AG04450 (cell line): ENCODE measurements at regions of chr9 and their contacts with region 1.

Region 1: DNA sequence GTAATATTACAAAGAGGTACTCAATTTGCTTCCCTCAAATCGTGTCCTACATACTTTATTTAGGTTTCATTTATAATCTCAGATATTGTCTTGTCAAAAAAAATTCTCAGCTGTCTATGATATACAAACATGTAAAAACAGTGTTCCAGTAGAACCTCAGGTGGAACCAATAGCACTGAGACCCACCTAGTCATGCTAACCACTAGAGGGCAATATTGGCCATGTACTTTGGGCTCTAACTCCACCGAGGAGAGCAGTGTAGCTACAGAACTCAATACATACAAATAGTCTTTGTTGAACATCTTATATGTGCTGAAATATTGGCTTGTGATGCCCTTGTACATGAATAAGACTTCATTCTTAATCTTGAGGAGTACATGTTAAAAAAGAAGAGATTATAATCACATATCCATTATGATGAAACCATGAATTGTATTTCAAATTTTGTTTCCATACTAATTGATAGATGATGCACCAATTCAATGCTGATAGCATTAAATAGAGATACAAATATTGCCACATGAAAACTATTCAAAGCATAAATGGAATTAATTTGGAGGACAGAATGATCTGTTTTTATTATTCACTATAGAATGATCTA is 71.2 kb upstream of the CNTLN start:
- DNase-seq: peak; percentile 23
- H3K4me3 ChIP-seq: no peak overlapping the region
- H3K27ac ChIP-seq: no peak overlapping the region
- H3K27me3 ChIP-seq: no peaks in the 10 kb centered on the region
- CTCF ChIP-seq: peak; percentile 84

Region 2: DNA sequence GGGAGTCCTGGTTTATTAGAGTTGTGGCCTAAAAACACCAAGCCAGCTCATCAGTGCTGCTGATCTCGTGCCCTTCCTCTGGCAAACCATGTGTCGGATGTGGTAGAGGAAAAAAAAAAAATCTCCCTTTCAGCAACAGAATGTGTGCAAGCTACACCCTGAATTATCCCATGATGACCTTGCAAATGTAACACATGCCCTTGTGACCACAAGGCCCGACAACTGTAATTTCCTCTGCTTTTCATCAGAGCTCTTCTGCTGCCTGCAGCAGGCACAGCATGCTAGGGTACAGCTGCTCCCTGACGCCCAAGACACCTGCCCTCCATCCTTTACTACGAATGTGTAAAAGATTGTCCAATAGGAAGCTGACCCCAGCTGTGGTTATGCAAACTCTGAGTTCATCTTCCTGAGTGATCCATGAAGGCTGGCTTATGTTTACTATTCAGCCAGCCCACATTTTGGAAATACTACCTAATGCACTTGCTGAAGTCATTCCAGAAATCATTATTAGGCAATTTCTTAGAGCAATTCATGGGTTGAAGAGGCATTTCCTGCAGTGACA is 178.6 kb before region 1 on chr9:
- CTCF ChIA-PET with region 1: interaction called, 15 read pairs
- POLR2A ChIA-PET with region 1: no interaction called
- DNase-seq: peak; percentile 98
- H3K4me3 ChIP-seq: no peak overlapping the region
- H3K27ac ChIP-seq: peak overlapping the region; percentile 77
- H3K27me3 ChIP-seq: no peaks in the 10 kb centered on the region
- CTCF ChIP-seq: no peak

Region 3: DNA sequence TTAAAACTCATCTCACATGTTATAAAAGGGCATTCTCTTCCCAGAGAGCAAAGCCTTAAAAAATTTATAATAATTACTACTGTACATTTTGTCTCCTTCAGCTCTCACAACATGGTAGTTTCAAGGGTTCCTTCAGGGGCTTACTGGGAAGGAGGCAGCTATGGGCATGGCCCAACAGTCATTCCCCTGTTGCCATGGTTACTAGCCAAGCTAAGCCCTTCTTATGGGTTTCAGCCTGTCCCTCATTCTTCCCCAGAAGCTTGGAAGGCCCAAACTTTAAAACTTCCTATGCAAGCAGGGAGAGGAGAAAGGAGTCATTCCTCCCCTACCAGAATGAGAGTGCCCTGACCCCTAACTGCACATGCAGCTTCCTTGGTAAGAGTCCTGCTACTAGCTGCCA is 11.0 kb before region 1 on chr9:
- CTCF ChIA-PET with region 1: interaction called, 20 read pairs
- POLR2A ChIA-PET with region 1: no interaction called
- DNase-seq: no peak
- H3K4me3 ChIP-seq: no peak overlapping the region
- H3K27ac ChIP-seq: no peak overlapping the region
- H3K27me3 ChIP-seq: no peaks in the 10 kb centered on the region
- CTCF ChIP-seq: no peak

Region 4: DNA sequence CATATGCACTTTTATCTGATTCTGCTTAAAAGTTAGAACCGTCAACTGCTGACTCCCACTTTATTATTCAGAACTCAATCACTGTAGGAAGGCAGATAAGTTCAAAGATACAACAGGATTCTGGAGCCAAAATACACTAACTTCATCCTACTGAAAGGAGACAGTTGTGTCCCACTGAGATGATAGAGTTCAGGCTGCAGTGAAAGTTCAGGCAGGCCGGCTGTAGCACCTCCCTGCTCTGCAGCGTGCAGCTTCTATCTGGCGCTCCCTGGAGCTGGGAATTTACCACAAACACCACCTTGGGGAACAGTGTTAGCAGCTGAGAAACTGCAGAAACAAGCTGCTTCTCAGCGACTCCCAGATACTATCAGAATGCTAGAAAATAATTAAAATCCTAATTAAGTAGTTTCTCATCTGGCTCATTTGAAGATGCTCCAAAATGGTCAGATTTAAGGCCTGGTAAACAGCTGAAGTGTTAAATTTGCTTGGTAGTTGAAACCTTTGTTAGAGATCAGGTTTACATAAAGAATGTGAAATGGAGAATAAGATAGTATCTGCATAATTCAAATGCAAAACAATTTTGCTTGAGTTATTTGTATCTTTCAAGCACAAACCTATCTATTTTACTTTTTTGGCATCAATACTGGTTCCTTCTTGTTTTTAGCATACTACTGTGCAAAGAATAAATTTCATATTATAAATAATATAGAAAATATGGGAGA is 18.9 kb after region 1 on chr9:
- CTCF ChIA-PET with region 1: interaction called, 12 read pairs
- POLR2A ChIA-PET with region 1: no interaction called
- DNase-seq: peak; percentile 18
- H3K4me3 ChIP-seq: no peak overlapping the region
- H3K27ac ChIP-seq: peak overlapping the region; percentile 24
- H3K27me3 ChIP-seq: no peaks in the 10 kb centered on the region
- CTCF ChIP-seq: peak; percentile 37

Region 5: GRCh38 chr9:17862101-17862500 is 798.5 kb after region 1 on chr9:
- CTCF ChIA-PET with region 1: no interaction called
- POLR2A ChIA-PET with region 1: no interaction called
- DNase-seq: no peak
- H3K4me3 ChIP-seq: no peak overlapping the region
- H3K27ac ChIP-seq: no peak overlapping the region
- H3K27me3 ChIP-seq: no peaks in the 10 kb centered on the region
- CTCF ChIP-seq: no peak

Region 6: DNA sequence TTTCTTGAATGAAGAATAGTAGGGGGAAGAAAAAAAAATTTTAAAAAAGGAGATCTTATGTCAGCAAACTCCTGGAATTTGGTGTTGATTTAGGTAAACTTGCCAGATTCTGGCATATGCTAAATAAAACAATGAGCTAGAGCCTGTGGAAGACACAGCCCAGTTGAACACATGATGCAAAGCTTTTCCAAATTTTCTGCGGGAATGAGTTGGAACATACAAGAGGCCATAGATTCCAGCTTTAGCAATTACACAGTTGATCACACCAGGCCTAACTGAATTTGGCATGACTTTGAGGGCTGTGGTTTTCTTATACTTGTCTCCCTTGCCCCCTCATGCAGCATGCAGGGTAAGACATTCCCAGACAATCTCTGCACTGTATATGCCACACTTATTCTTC is 812.3 kb after region 1 on chr9:
- CTCF ChIA-PET with region 1: no interaction called
- POLR2A ChIA-PET with region 1: no interaction called
- DNase-seq: no peak
- H3K4me3 ChIP-seq: no peak overlapping the region
- H3K27ac ChIP-seq: no peak overlapping the region
- H3K27me3 ChIP-seq: no peaks in the 10 kb centered on the region
- CTCF ChIP-seq: no peak